IMR-90 (cell line): ENCODE measurements at regions of chr3 and their contacts with region 1.

Region 1: DNA sequence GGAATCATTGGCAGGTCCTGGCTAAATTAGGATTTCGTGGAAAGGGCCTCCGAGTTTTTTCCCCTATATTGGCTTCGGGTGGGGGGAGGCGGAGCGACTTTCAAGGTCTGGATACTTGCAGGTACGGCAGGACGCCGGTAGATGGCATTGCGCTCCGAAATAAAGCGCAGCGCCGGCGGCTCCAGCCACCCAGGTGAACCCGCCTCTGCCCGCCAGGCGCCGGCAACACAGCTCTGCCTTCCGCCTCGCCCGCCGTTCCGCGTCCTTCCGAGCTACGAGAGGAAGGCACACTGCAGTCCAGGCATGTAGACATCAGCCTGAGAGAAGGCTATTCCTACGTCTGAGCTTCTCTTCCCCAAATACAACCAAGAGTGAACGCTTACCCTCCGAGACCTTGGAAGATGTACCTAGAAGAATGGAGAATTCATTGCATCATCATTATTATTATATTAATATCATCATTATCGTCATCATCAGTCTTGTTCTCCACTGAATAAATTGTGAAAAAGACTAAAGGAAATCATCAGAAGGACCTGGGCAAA is 514.1 kb downstream of the MECOM start:
- DNase-seq: peak; percentile 80
- ATAC-seq: peak; percentile 82
- H3K4me3 ChIP-seq: peak overlapping the region; percentile 43
- H3K27ac ChIP-seq: peak overlapping the region; percentile 59; the same call in 1 of the 2 replicates
- H3K4me1 ChIP-seq: peaks cover 2% of the 10 kb centered on the region; the same call in 1 of the 2 replicates
- H3K27me3 ChIP-seq: no peaks in the 10 kb centered on the region
- CTCF ChIP-seq: peak; percentile 91
- POLR2A ChIP-seq: no peak
- RAD21 ChIP-seq: peak; percentile 79

Region 2: GRCh38 chr3:168952551-168952950 is 196.9 kb before region 1 on chr3:
- CTCF ChIA-PET with region 1: no interaction called
- POLR2A ChIA-PET with region 1: no interaction called
- dilution Hi-C with region 1: no loop called
- in situ Hi-C with region 1: no loop called
- intact Hi-C with region 1: loop called (anchors 2 kb)
- DNase-seq: peak; percentile 47
- ATAC-seq: peak; percentile 76; the same call in 1 of the 2 replicates
- H3K4me3 ChIP-seq: no peak overlapping the region
- H3K27ac ChIP-seq: no peak overlapping the region
- H3K4me1 ChIP-seq: no peaks in the 10 kb centered on the region
- H3K27me3 ChIP-seq: no peaks in the 10 kb centered on the region
- CTCF ChIP-seq: peak; percentile 39
- POLR2A ChIP-seq: no peak
- RAD21 ChIP-seq: peak; percentile 18; the same call in 1 of the 2 replicates

Region 3: GRCh38 chr3:169161011-169161410 is 11.6 kb after region 1 on chr3:
- CTCF ChIA-PET with region 1: interaction called, 10 read pairs
- POLR2A ChIA-PET with region 1: no interaction called
- dilution Hi-C with region 1: no loop called
- in situ Hi-C with region 1: no loop called
- intact Hi-C with region 1: no loop called
- DNase-seq: no peak
- ATAC-seq: no peak
- H3K4me3 ChIP-seq: no peak overlapping the region
- H3K27ac ChIP-seq: no peak overlapping the region
- H3K4me1 ChIP-seq: no peaks in the 10 kb centered on the region; the same call in 1 of the 2 replicates
- H3K27me3 ChIP-seq: no peaks in the 10 kb centered on the region
- CTCF ChIP-seq: no peak
- POLR2A ChIP-seq: no peak
- RAD21 ChIP-seq: no peak

Region 4: GRCh38 chr3:169295126-169295525 is 145.7 kb after region 1 on chr3:
- CTCF ChIA-PET with region 1: interaction called, 5 read pairs
- POLR2A ChIA-PET with region 1: no interaction called
- dilution Hi-C with region 1: no loop called
- in situ Hi-C with region 1: no loop called
- intact Hi-C with region 1: loop called (anchors 1 kb)
- DNase-seq: peak; percentile 42
- ATAC-seq: no peak
- H3K4me3 ChIP-seq: no peak overlapping the region
- H3K27ac ChIP-seq: no peak overlapping the region
- H3K4me1 ChIP-seq: no peaks in the 10 kb centered on the region
- H3K27me3 ChIP-seq: peaks cover 2% of the 10 kb centered on the region; the same call in 1 of the 2 replicates
- CTCF ChIP-seq: peak; percentile 66
- POLR2A ChIP-seq: no peak
- RAD21 ChIP-seq: peak; percentile 67

Region 5: GRCh38 chr3:169668957-169669681 is 519.7 kb after region 1 on chr3:
- CTCF ChIA-PET with region 1: interaction called, 23 read pairs
- POLR2A ChIA-PET with region 1: no interaction called
- dilution Hi-C with region 1: no loop called
- in situ Hi-C with region 1: no loop called
- intact Hi-C with region 1: loop called (anchors 2 kb)
- DNase-seq: peak; percentile 50
- ATAC-seq: peak; percentile 99
- H3K4me3 ChIP-seq: peak overlapping the region; percentile 41
- H3K27ac ChIP-seq: no peak overlapping the region
- H3K4me1 ChIP-seq: no peaks in the 10 kb centered on the region
- H3K27me3 ChIP-seq: peaks cover 43% of the 10 kb centered on the region
- CTCF ChIP-seq: peak; percentile 82
- POLR2A ChIP-seq: no peak
- RAD21 ChIP-seq: peak; percentile 91

Region 6: DNA sequence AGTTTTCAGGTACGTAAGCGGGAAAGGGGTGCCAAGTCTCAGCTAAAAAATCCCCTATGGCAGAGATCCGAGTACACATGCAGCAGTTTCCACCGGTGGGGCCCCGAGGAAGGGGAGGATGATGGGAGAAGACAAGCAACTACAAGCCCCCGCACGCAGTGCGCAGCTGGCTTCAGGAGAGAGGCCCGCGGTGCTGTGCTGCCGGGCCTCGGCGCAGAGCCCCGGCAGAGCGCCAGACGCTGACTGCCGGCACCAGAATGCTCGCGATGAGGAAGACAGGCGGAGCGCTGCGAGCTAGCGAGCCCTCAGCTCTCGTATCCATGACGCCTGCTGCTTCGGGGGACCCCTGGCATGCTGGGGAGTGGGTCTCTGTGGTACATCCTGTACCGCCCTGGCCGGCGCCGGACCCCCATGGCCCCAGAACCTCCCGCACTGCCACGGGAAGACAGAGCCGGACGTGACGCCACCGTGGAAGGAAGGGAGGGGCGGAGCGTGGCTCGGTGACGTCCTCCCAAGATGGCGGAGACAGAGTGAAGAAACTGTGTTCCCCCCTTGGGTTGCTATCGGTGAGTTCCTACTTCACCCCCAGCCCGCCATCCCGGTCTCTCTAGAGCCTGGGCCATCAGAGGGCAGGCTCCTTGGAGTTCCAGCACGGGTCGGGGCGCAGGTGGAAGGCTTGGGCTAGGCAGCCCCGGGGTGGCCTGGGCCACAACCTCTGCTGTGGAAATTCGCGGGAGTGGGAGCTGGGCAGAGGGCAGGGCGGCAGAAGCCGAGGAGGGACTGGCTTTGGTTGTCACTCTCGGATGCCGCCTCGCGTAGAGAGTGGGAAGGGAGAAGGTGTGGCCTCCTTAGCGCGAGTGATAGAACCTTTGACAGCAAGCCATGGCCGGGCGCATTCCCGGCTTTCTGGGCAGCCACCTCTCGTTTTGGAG is 623.7 kb after region 1 on chr3 and contains the start of gene MYNN:
- CTCF ChIA-PET with region 1: no interaction called
- POLR2A ChIA-PET with region 1: no interaction called
- dilution Hi-C with region 1: no loop called
- in situ Hi-C with region 1: no loop called
- intact Hi-C with region 1: loop called (anchors 2 kb)
- DNase-seq: peak; percentile 86
- ATAC-seq: peak; percentile 86
- H3K4me3 ChIP-seq: peak within 1 kb of the TSS; percentile 80
- H3K27ac ChIP-seq: peak within 1 kb of the TSS; percentile 94
- H3K4me1 ChIP-seq: no peaks in the 10 kb centered on the region
- H3K27me3 ChIP-seq: no peaks in the 10 kb centered on the region
- CTCF ChIP-seq: peak; percentile 18; the same call in 1 of the 2 replicates
- POLR2A ChIP-seq: peak; percentile 97
- RAD21 ChIP-seq: no peak; the same call in 1 of the 2 replicates
- total RNA-seq, gene MYNN: 26.9 and 33.1 TPM in 2 replicates